MCF 10A (cell line): ENCODE measurements at regions of chr2 and their contacts with region 1.

Region 1: GRCh38 chr2:196926562-196927375 is at the start of gene PGAP1:
- DNase-seq: peak; percentile 89
- H3K4me3 Mint-ChIP-seq: peak within 1 kb of the TSS; percentile 96
- H3K27ac Mint-ChIP-seq: peak within 1 kb of the TSS; percentile 61
- H3K4me1 Mint-ChIP-seq: peaks cover 22% of the 10 kb centered on the region
- H3K27me3 Mint-ChIP-seq: no peaks in the 10 kb centered on the region
- CTCF ChIP-seq: no peak
- total RNA-seq, gene PGAP1: 7.4 and 8.6 TPM in 2 replicates

Region 2: DNA sequence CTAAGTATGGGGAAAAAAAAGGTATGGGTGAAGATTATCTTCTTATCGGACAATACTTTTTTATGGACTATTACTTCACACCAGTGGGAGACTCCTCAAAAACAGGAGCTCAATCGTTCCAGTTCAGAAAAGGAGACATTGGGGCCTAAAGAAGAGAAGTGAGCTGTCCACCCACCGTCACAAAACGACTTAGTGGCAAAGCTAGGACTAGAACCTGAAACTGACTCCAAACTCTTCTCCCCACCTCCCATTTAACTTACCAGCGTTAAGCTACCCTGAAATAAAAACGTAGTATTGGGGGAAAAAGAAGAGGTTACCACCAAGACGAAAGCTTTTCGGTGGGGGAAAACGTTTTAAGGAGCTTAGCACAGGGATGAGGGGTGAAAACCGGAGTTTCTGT is 127.8 kb before region 1 on chr2:
- CTCF ChIA-PET with region 1: interaction called, 4 read pairs
- POLR2A ChIA-PET with region 1: interaction called, 16 read pairs
- intact Hi-C with region 1: loop called (anchors 10 kb)
- DNase-seq: peak; percentile 14
- H3K4me3 Mint-ChIP-seq: peak overlapping the region; percentile 89
- H3K27ac Mint-ChIP-seq: peak overlapping the region; percentile 94
- H3K4me1 Mint-ChIP-seq: peaks cover 36% of the 10 kb centered on the region
- H3K27me3 Mint-ChIP-seq: no peaks in the 10 kb centered on the region
- CTCF ChIP-seq: no peak

Region 3: GRCh38 chr2:196987649-196988364 is 61.0 kb after region 1 on chr2:
- CTCF ChIA-PET with region 1: interaction called, 3 read pairs
- POLR2A ChIA-PET with region 1: interaction called, 7 read pairs
- intact Hi-C with region 1: loop called (anchors 5 kb)
- DNase-seq: peak; percentile 94
- H3K4me3 Mint-ChIP-seq: peak overlapping the region; percentile 65
- H3K27ac Mint-ChIP-seq: peak overlapping the region; percentile 98
- H3K4me1 Mint-ChIP-seq: peaks cover 18% of the 10 kb centered on the region
- H3K27me3 Mint-ChIP-seq: no peaks in the 10 kb centered on the region
- CTCF ChIP-seq: no peak

Region 4: DNA sequence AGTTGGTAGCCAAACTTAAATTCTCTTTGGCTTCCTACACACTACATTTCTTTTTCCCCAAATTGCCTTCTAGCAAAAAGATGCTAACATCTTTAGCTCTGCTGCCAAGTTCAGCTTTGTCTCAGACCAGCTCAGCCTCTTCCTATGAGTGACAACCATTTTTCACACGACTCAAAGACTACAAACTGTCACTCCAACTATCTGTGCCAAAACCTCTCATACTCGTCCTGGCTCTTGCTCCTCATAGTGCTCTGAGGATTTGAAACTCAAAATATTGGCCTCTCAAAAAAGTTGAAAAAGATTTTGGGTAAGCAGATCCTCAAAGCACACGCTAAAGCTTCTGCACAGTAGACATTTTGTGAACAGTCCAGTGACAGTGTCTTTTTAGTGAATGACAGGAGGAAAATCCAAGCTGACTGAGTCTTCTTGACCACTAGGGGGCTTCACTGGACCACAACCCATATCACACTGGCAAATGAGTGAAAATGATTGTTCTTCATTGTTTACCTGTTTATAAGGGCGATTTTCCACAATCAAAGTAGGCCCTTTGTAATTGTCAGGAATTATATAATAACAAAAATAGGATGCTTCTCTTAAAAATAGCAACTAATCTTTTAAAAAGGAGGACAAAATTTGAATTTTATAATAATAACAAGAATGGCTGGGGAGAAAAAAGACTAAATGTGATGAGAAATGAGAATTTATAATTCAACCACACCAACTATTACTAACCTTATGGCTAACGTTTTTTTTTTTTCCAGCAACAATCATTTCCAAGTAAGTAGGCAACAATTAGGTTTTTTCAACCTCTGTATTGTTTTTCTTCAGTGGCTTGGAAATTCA is 85.3 kb after region 1 on chr2:
- CTCF ChIA-PET with region 1: interaction called, 4 read pairs
- POLR2A ChIA-PET with region 1: interaction called, 5 read pairs
- intact Hi-C with region 1: loop called (anchors 2 kb)
- DNase-seq: peak; percentile 62
- H3K4me3 Mint-ChIP-seq: no peak overlapping the region
- H3K27ac Mint-ChIP-seq: no peak overlapping the region
- H3K4me1 Mint-ChIP-seq: peaks cover 13% of the 10 kb centered on the region
- H3K27me3 Mint-ChIP-seq: no peaks in the 10 kb centered on the region
- CTCF ChIP-seq: peak; percentile 60

Region 5: GRCh38 chr2:197097578-197098366 is 171.0 kb after region 1 on chr2:
- CTCF ChIA-PET with region 1: no interaction called
- POLR2A ChIA-PET with region 1: no interaction called
- intact Hi-C with region 1: loop called (anchors 5 kb)
- DNase-seq: peak; percentile 29
- H3K4me3 Mint-ChIP-seq: no peak overlapping the region
- H3K27ac Mint-ChIP-seq: no peak overlapping the region
- H3K4me1 Mint-ChIP-seq: peaks cover 9% of the 10 kb centered on the region
- H3K27me3 Mint-ChIP-seq: no peaks in the 10 kb centered on the region
- CTCF ChIP-seq: no peak